ENCODE measurements at regions of chr7 and their contacts with region 1.

Region 1: DNA sequence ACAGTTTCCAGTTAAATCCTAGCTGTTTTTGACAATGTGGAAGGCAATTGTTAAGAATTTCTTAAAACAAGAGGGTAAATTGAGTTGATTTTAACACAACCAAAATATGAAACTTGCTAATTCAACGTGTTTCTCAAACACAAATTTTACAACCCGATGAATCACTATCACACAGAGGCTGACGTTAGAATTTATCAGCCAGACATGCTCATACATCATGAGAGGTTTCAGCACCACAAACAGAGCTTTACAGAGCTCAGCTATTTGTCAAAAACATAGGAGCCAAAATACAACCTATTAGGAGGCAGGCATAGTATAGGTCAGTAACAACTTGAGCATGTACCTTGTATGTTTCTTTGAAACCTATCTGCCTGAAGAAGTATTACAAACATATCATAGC is 36.1 kb downstream of the LRRN3 start:
- DNase-seq: no peak
- ATAC-seq: no peak
- H3K4me3 ChIP-seq: no peak overlapping the region
- H3K4me3 Mint-ChIP-seq: no peak overlapping the region
- H3K27ac ChIP-seq: no peak overlapping the region
- H3K27ac Mint-ChIP-seq: peak overlapping the region in 1 of 9 donors; percentile 14
- H3K4me1 ChIP-seq: no peaks in the 10 kb centered on the region
- H3K4me1 Mint-ChIP-seq: peaks cover 0 to 10% (median 0%) of the 10 kb centered on the region in 7 donors
- H3K27me3 ChIP-seq: no peaks in the 10 kb centered on the region
- H3K27me3 Mint-ChIP-seq: no peaks in the 10 kb centered on the region

Region 2: GRCh38 chr7:111112439-111112838 is 14.5 kb before region 1 on chr7:
- CTCF ChIA-PET with region 1: interaction called, 3 read pairs
- POLR2A ChIA-PET with region 1: interaction called, 3 read pairs
- intact Hi-C with region 1: loop called in 1 of 2 experiments (anchors 2 kb)
- DNase-seq: no peak
- ATAC-seq: no peak
- H3K4me3 ChIP-seq: no peak overlapping the region
- H3K4me3 Mint-ChIP-seq: no peak overlapping the region
- H3K27ac ChIP-seq: no peak overlapping the region
- H3K27ac Mint-ChIP-seq: peak overlapping the region in 7 of 9 donors; percentile 22 to 60 (median 33)
- H3K4me1 ChIP-seq: no peaks in the 10 kb centered on the region
- H3K4me1 Mint-ChIP-seq: peaks cover 3 to 56% (median 42%) of the 10 kb centered on the region in 7 donors
- H3K27me3 ChIP-seq: no peaks in the 10 kb centered on the region
- H3K27me3 Mint-ChIP-seq: no peaks in the 10 kb centered on the region

Region 3: DNA sequence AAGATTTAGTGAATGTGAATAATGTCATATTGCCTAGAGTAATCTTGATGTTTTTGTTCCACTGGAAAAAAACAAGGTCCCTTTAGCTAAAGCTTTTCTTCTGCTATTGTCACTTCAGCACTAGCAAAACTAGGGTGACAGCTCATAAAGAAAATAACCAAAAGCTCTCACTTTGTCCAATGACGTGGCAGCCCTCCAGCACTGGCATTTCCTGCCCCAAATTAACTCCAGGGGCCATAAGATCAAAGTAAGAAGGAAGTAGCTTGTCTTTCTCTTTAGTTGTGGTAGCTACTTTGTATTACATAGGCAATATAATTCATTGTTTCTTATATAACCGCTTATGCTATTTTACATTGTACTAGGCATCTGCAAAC is 11.2 kb after region 1 on chr7:
- CTCF ChIA-PET with region 1: no interaction called
- POLR2A ChIA-PET with region 1: interaction called, 4 read pairs
- intact Hi-C with region 1: loop called in 1 of 2 experiments (anchors 1 kb)
- DNase-seq: peak in 8 of 9 donors; percentile 40 to 73 (median 62)
- ATAC-seq: peak; percentile 85
- H3K4me3 ChIP-seq: no peak overlapping the region
- H3K4me3 Mint-ChIP-seq: peak overlapping the region in 7 of 10 donors; percentile 26 to 56 (median 45)
- H3K27ac ChIP-seq: no peak overlapping the region
- H3K27ac Mint-ChIP-seq: peak overlapping the region in 6 of 9 donors; percentile 22 to 83 (median 67)
- H3K4me1 ChIP-seq: peaks cover 6 to 14% of the 10 kb centered on the region in 2 donors
- H3K4me1 Mint-ChIP-seq: peaks cover 4 to 35% (median 20%) of the 10 kb centered on the region in 7 donors
- H3K27me3 ChIP-seq: no peaks in the 10 kb centered on the region
- H3K27me3 Mint-ChIP-seq: no peaks in the 10 kb centered on the region

Region 4: GRCh38 chr7:111183321-111183720 is 56.3 kb after region 1 on chr7:
- CTCF ChIA-PET with region 1: no interaction called
- POLR2A ChIA-PET with region 1: no interaction called
- intact Hi-C with region 1: no loop called
- DNase-seq: no peak
- ATAC-seq: no peak
- H3K4me3 ChIP-seq: no peak overlapping the region
- H3K4me3 Mint-ChIP-seq: no peak overlapping the region
- H3K27ac ChIP-seq: no peak overlapping the region
- H3K27ac Mint-ChIP-seq: no peak overlapping the region
- H3K4me1 ChIP-seq: no peaks in the 10 kb centered on the region
- H3K4me1 Mint-ChIP-seq: peaks cover 0 to 4% (median 0%) of the 10 kb centered on the region in 7 donors
- H3K27me3 ChIP-seq: no peaks in the 10 kb centered on the region
- H3K27me3 Mint-ChIP-seq: no peaks in the 10 kb centered on the region

Region 5: DNA sequence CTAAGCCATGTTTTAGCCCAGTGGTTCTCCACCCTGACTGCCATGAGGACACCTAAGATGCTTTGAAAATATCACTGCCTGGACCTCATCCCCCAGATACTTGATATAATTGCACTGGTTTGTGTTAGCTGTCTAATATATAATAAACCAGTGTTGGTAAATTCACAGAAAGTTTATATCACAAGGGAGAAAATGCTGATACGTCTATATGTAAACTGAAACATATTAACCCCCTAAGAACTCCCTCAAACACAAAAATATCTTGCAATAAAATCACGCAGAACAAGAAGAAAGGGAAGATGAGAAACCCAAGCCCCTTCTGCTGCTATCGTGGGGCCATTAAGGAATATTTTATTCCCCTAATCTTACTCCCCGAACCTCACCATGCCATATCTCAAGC is 427.1 kb after region 1 on chr7:
- CTCF ChIA-PET with region 1: no interaction called
- POLR2A ChIA-PET with region 1: no interaction called
- intact Hi-C with region 1: no loop called
- DNase-seq: no peak
- ATAC-seq: no peak
- H3K4me3 ChIP-seq: no peak overlapping the region
- H3K4me3 Mint-ChIP-seq: no peak overlapping the region
- H3K27ac ChIP-seq: no peak overlapping the region
- H3K27ac Mint-ChIP-seq: no peak overlapping the region
- H3K4me1 ChIP-seq: no peaks in the 10 kb centered on the region
- H3K4me1 Mint-ChIP-seq: peaks cover 7 to 35% (median 19%) of the 10 kb centered on the region in 7 donors
- H3K27me3 ChIP-seq: no peaks in the 10 kb centered on the region
- H3K27me3 Mint-ChIP-seq: no peaks in the 10 kb centered on the region

Measured in naive thymus-derived CD4-positive, alpha-beta T cell (primary cell).